Activated CD4-positive, alpha-beta memory T cell treated with anti-CD3 and anti-CD28 coated beads, Interleukin-2, amount 10 ng/mL, durations not matched to agents 7 days and 5 days (primary cell): ENCODE measurements at regions of chr3 and their contacts with region 1.

Region 1: GRCh38 chr3:56251343-56251945 is 216.8 kb downstream of the ERC2 start:
- DNase-seq: peak; percentile 22
- H3K4me3 Mint-ChIP-seq: no peak overlapping the region
- H3K27ac Mint-ChIP-seq: no peak overlapping the region
- H3K4me1 Mint-ChIP-seq: no peaks in the 10 kb centered on the region
- H3K27me3 Mint-ChIP-seq: peaks cover 2% of the 10 kb centered on the region

Region 2: GRCh38 chr3:56238299-56238698 is 13.1 kb before region 1 on chr3:
- CTCF ChIA-PET with region 1: interaction called, 10 read pairs
- POLR2A ChIA-PET with region 1: no interaction called
- DNase-seq: no peak
- H3K4me3 Mint-ChIP-seq: no peak overlapping the region
- H3K27ac Mint-ChIP-seq: no peak overlapping the region
- H3K4me1 Mint-ChIP-seq: no peaks in the 10 kb centered on the region
- H3K27me3 Mint-ChIP-seq: peaks cover 11% of the 10 kb centered on the region